MCF 10A (cell line): ENCODE measurements at regions of chr7 and their contacts with region 1.

Region 1: GRCh38 chr7:55255496-55256435 is 109.4 kb upstream of the LANCL2 start:
- DNase-seq: peak; percentile 81
- H3K4me3 Mint-ChIP-seq: peak overlapping the region; percentile 78
- H3K27ac Mint-ChIP-seq: peak overlapping the region; percentile 72
- H3K4me1 Mint-ChIP-seq: no peaks in the 10 kb centered on the region
- H3K27me3 Mint-ChIP-seq: peaks cover 12% of the 10 kb centered on the region
- CTCF ChIP-seq: peak; percentile 68

Region 2: GRCh38 chr7:54591404-54592386 is 664.1 kb before region 1 on chr7:
- CTCF ChIA-PET with region 1: no interaction called
- POLR2A ChIA-PET with region 1: no interaction called
- intact Hi-C with region 1: no loop called
- DNase-seq: no peak
- H3K4me3 Mint-ChIP-seq: no peak overlapping the region
- H3K27ac Mint-ChIP-seq: no peak overlapping the region
- H3K4me1 Mint-ChIP-seq: no peaks in the 10 kb centered on the region
- H3K27me3 Mint-ChIP-seq: peaks cover 20% of the 10 kb centered on the region
- CTCF ChIP-seq: no peak

Region 3: GRCh38 chr7:54758702-54759592 is 496.8 kb before region 1 on chr7 and contains the start of gene SEC61G:
- CTCF ChIA-PET with region 1: interaction called, 309 read pairs
- POLR2A ChIA-PET with region 1: interaction called, 4 read pairs
- intact Hi-C with region 1: no loop called
- DNase-seq: peak; percentile 97
- H3K4me3 Mint-ChIP-seq: peak within 1 kb of the TSS; percentile 94
- H3K27ac Mint-ChIP-seq: peak within 1 kb of the TSS; percentile 96
- H3K4me1 Mint-ChIP-seq: peaks cover 5% of the 10 kb centered on the region
- H3K27me3 Mint-ChIP-seq: no peaks in the 10 kb centered on the region
- CTCF ChIP-seq: no peak
- total RNA-seq, gene SEC61G: 246 and 490 TPM in 2 replicates

Region 4: GRCh38 chr7:54877683-54878082 is 378.1 kb before region 1 on chr7:
- CTCF ChIA-PET with region 1: interaction called, 6 read pairs
- POLR2A ChIA-PET with region 1: no interaction called
- intact Hi-C with region 1: loop called (anchors 1 kb)
- DNase-seq: peak; percentile 39
- H3K4me3 Mint-ChIP-seq: no peak overlapping the region
- H3K27ac Mint-ChIP-seq: no peak overlapping the region
- H3K4me1 Mint-ChIP-seq: peaks cover 19% of the 10 kb centered on the region
- H3K27me3 Mint-ChIP-seq: no peaks in the 10 kb centered on the region
- CTCF ChIP-seq: peak; percentile 26

Region 5: DNA sequence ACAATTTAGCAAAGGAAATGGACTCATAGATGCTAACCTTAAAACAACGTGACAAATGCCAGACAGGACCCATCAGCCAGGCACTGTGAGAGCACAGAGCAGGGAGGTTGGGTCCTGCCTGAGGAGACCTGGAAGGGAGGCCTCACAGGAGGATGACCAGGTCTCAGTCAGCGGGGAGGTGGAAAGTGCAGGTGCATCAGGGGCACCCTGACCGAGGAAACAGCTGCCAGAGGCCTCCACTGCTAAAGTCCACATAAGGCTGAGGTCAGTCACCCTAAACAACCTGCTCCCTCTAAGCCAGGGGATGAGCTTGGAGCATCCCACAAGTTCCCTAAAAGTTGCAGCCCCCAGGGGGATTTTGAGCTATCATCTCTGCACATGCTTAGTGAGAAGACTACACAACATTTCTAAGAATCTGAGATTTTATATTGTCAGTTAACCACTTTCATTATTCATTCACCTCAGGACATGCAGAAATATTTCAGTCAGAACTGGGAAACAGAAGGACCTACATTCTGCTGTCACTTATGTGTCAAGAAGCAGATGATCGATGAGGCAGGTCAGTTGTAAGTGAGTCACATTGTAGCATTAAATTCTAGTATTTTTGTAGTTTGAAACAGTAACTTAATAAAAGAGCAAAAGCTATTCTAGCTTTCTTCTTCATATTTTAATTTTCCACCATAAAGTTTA is 48.2 kb before region 1 on chr7:
- CTCF ChIA-PET with region 1: interaction called, 22 read pairs
- POLR2A ChIA-PET with region 1: interaction called, 7 read pairs
- intact Hi-C with region 1: no loop called
- DNase-seq: no peak
- H3K4me3 Mint-ChIP-seq: no peak overlapping the region
- H3K27ac Mint-ChIP-seq: no peak overlapping the region
- H3K4me1 Mint-ChIP-seq: no peaks in the 10 kb centered on the region
- H3K27me3 Mint-ChIP-seq: no peaks in the 10 kb centered on the region
- CTCF ChIP-seq: no peak

Region 6: DNA sequence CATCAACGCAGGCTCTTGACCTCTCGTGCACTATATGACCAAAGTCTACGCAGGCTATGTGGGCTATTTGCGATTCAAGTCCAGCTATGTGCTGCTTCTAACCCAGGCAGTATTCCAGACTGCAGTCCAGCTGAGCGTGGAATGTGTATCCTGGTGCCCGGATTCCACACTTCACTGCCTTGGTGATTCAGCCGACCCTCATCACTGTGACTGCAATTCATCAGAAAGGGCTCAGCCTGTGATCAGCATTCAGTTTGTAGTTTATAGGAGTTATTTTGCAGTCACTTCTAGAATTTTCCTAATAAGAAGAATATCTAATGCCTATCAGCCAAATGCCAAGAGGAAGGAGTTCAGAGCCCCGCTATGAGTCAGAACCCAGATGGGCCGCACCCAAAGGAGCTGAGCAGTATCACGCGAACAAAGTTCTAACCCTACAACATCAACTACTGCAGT is 10.5 kb before region 1 on chr7:
- CTCF ChIA-PET with region 1: interaction called, 55 read pairs
- POLR2A ChIA-PET with region 1: no interaction called
- intact Hi-C with region 1: no loop called
- DNase-seq: peak; percentile 34
- H3K4me3 Mint-ChIP-seq: no peak overlapping the region
- H3K27ac Mint-ChIP-seq: no peak overlapping the region
- H3K4me1 Mint-ChIP-seq: peaks cover 7% of the 10 kb centered on the region
- H3K27me3 Mint-ChIP-seq: peaks cover 6% of the 10 kb centered on the region
- CTCF ChIP-seq: no peak